ENCODE measurements at regions of chr19 and their contacts with region 1.

Region 1: DNA sequence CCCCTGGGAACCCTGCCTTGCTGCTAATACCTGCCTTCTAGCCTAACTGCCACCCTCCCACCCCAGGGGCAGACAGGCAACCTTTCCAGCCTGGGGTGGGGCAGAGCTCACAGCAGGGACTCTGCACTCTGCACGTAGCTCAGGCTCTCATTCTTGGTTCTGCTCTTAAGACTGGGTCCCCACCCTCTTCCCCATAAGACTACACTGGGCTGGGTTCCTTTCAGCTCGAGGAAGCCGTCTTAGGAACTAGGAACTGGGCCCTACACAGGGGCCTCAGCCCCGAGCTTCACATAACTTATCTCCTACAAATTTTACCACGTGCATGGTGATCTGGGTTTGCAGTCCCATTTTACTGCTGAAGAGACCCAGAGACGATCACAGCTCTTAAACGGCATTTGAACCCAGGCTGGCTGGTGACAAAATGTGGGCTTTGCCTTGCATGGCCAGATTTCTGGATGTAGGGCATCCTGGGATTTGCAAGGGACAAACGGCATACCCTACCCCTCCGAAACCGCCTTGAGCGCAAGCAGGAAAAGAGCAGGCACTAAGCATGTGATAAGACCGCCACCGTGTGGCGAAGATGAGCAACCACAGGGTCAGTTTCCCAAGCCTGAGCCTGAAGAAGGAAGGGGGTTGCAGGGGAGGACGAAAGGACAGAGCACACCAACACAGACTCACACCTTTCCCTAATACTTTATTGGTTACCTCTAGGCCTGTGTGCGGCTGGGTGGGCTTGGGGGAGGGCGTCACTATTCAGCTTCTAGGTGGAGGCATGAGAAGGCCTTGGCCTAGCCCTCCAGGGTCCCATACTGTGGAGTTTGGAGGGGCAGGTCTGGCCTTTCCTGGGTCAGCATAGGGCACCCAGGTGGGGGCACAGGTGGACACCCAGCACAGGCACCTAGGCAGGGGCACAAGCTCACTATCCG is 5.1 kb downstream of the JUNB start:
- DNase-seq: peak; percentile 85
- H3K4me3 ChIP-seq: peak overlapping the region in 1 of 4 donors; percentile 32
- H3K27ac ChIP-seq: peak overlapping the region; percentile 97 to 99 (median 98)
- H3K4me1 ChIP-seq: peaks cover 12 to 43% (median 25%) of the 10 kb centered on the region in 4 donors
- H3K27me3 ChIP-seq: no peaks in the 10 kb centered on the region
- CTCF ChIP-seq: peak; percentile 93 to 100 (median 96)
- EP300 ChIP-seq: no peak
- POLR2A ChIP-seq: peak; percentile 72

Region 2: DNA sequence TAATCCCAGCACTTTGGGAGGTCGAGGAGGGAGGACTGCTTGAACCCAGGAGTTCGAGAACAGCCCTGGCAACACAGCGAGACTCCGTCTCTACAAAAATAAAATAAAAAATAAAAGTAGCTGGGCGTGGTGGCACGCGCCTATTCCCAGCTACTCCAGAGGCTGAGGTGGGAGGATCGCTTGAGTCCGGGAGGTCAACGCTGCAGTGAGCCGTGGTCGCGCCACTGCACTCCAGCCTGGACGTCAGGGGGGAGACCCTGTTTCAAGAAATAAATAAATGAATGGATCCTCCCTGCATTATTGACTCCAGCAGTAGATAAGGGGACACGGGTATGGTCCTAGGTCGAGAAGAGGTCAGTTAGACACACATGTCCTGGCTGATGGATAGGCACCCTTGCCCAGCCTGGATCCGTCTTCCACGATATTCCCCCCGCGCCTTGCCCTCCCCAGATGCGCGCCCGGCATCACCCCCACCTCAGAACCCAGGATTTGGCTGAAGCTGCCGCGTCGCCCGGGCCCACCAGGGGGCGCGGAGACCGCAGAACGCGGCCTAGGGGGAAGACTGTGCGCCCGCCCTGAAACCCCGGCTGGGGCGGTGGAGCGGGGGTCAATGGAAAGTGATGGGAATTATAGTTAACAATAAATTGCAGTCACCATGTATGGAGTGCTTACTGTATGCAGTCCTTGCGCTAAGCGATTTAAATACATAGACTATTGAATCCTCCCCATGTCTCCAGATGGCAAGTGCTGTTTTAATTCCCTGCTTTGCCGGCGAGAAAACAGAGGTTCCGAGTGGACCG is 19.0 kb before region 1 on chr19:
- in situ Hi-C with region 1: no loop called
- intact Hi-C with region 1: loop called (anchors 1 kb)
- DNase-seq: peak; percentile 87
- H3K4me3 ChIP-seq: peak overlapping the region; percentile 27 to 59 (median 46)
- H3K27ac ChIP-seq: peak overlapping the region; percentile 91 to 94 (median 94)
- H3K4me1 ChIP-seq: peaks cover 12 to 54% (median 35%) of the 10 kb centered on the region in 4 donors
- H3K27me3 ChIP-seq: no peaks in the 10 kb centered on the region
- CTCF ChIP-seq: peak; percentile 95 to 99 (median 98)
- EP300 ChIP-seq: no peak
- POLR2A ChIP-seq: no peak

Measured in transverse colon (tissue), 4 donors.